A673 (cell line): ENCODE measurements at regions of chr11 and their contacts with region 1.

Region 1: GRCh38 chr11:9613118-9613829 is 39.8 kb downstream of the WEE1 start:
- DNase-seq: peak; percentile 95
- H3K4me3 ChIP-seq: peak overlapping the region; percentile 48
- H3K27ac ChIP-seq: peak overlapping the region; percentile 72
- H3K4me1 ChIP-seq: no peaks in the 10 kb centered on the region
- H3K27me3 ChIP-seq: no peaks in the 10 kb centered on the region
- CTCF ChIP-seq: peak; percentile 91

Region 2: DNA sequence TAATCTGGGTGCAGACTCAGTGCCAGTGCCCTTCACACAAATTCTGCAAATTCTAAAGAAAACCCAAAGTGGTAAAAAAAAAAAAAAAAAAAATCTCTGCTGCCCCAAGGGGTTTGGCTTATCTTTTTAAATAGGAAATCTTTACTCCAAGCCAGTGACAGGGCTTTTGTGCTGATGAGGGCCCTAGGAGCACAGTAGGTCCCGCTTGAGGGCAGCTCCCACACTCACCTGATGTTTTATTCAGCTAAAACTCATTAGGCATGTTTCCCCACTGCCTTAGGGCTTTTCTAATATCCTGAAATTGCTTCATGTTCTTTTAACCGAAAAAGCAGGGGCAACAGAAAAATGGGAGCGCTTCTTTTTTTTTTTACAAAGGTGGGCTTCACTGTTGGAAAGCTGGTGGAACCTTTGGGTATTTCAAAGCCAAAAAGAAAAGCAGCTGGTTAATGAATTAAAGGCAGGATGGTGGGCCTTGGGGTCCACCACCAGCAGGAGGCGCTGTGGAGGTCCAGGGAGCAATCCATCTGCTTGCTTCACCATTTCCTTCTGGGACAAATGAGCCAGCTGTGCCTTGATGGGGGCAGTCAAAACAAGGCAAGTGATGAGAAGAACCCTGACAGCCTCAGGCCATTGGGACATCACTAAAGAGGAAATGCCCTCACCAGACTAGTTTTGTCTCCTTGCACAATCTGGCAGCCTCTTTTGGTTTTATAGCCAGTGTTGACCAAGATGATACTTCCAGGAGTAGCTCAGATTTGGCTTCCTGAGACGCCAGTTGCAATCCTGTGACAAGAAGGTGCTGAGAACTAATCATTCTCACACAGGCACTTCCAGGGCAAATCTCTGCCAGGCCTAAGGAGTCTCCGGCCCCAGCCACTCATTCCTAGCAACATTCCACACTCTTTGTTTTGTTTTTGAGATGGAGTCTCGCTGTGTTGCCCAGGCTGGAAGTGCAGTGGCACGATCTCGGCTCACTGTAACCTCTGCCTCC is 78.2 kb before region 1 on chr11:
- CTCF ChIA-PET with region 1: interaction called, 10 read pairs
- POLR2A ChIA-PET with region 1: no interaction called
- intact Hi-C with region 1: no loop called
- DNase-seq: peak; percentile 67
- H3K4me3 ChIP-seq: no peak overlapping the region
- H3K27ac ChIP-seq: no peak overlapping the region
- H3K4me1 ChIP-seq: no peaks in the 10 kb centered on the region
- H3K27me3 ChIP-seq: no peaks in the 10 kb centered on the region
- CTCF ChIP-seq: peak; percentile 85

Region 3: DNA sequence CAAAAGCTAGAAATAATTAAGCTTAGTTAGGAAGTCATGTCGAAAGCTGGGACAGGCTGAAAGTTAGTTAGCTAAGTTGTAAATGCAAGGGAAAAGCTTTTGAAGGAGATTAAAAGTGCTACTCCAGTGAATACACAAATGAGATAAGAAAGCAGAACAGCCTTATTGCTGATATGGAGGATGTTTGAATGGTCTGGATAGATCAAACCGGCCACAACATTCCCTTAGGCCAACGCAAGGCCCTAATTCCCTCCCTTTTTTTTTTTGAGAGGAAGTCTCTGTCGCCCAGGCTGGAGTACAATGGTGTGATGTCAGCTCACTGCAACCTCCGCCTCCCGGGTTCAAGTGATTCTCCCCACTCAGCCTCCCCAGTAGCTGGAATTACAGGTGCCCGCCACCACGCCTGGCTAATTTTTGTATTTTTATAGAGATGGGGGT is 63.1 kb before region 1 on chr11:
- CTCF ChIA-PET with region 1: no interaction called
- POLR2A ChIA-PET with region 1: no interaction called
- intact Hi-C with region 1: no loop called
- DNase-seq: no peak
- H3K4me3 ChIP-seq: no peak overlapping the region
- H3K27ac ChIP-seq: no peak overlapping the region
- H3K4me1 ChIP-seq: no peaks in the 10 kb centered on the region
- H3K27me3 ChIP-seq: no peaks in the 10 kb centered on the region
- CTCF ChIP-seq: no peak

Region 4: GRCh38 chr11:9663699-9664275 is 50.5 kb after region 1 on chr11 and contains the start of gene SWAP70:
- CTCF ChIA-PET with region 1: no interaction called
- POLR2A ChIA-PET with region 1: no interaction called
- intact Hi-C with region 1: no loop called
- DNase-seq: peak; percentile 75
- H3K4me3 ChIP-seq: peak within 1 kb of the TSS; percentile 91
- H3K27ac ChIP-seq: peak within 1 kb of the TSS; percentile 38
- H3K4me1 ChIP-seq: no peaks in the 10 kb centered on the region
- H3K27me3 ChIP-seq: no peaks in the 10 kb centered on the region
- CTCF ChIP-seq: no peak
- total RNA-seq, gene SWAP70: 18.9 and 21.1 TPM in 2 replicates

Region 5: DNA sequence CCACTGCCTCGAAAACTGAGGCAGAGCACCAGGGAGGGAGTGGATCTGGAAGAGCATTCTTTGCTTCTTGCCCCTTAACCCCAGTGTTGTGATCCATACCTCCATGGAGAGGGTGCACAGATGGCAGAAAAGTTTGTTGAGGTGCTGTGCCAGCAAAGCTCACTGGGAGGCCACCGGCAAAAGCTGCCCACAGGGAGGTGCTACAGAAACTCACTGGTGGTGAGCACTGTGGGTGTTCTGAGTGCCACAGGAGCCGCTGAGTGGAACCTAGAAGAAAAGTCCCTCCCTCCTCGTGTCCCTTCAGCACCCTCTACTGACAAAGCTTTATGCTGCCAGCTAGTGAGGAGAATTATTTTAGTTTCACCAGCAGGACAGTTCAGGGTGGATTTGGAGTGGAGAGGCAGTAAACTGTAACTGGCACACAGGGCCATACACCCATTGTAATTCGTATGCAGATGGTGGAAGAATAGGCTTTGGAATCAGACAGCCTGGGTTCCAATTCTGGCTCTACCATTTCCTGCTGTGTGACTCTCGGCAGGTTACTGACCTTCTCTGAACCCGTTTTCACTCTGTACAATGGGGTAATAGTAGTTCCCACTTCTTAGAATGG is 135.2 kb after region 1 on chr11:
- CTCF ChIA-PET with region 1: interaction called, 14 read pairs
- POLR2A ChIA-PET with region 1: no interaction called
- intact Hi-C with region 1: loop called (anchors 1 kb)
- DNase-seq: peak; percentile 91
- H3K4me3 ChIP-seq: no peak overlapping the region
- H3K27ac ChIP-seq: peak overlapping the region; percentile 69
- H3K4me1 ChIP-seq: peaks cover 18% of the 10 kb centered on the region
- H3K27me3 ChIP-seq: no peaks in the 10 kb centered on the region
- CTCF ChIP-seq: peak; percentile 84

Region 6: DNA sequence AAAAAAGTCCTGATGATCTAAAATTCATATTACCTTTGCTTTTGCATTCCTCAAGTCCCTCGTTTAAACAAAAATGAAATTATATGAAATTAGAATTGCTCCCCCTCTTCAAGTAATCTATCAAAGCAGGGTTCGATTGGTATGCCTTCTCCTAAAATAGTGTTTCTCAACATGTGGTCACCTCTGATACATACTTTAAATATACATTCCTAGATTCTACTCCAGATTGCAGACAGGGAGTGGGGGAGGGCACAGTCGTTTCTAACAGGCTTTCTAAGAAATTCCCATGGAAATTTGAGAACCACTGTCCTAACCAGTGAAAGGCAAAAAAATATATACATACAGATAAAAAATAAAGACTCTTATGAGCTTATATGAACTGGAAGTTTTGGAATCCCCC is 1102.9 kb after region 1 on chr11:
- CTCF ChIA-PET with region 1: no interaction called
- POLR2A ChIA-PET with region 1: no interaction called
- intact Hi-C with region 1: no loop called
- DNase-seq: no peak
- H3K4me3 ChIP-seq: no peak overlapping the region
- H3K27ac ChIP-seq: no peak overlapping the region
- H3K4me1 ChIP-seq: no peaks in the 10 kb centered on the region
- H3K27me3 ChIP-seq: no peaks in the 10 kb centered on the region
- CTCF ChIP-seq: no peak